Activated CD4-positive, alpha-beta T cell treated with anti-CD3 and anti-CD28 coated beads for 36 hours (primary cell): ENCODE measurements at regions of chr6 and their contacts with region 1.

Region 1: GRCh38 chr6:167079853-167080297 is 43.0 kb upstream of the CCR6 start:
- DNase-seq: peak; percentile 83
- ATAC-seq: peak; percentile 94
- H3K4me3 Mint-ChIP-seq: no peak overlapping the region
- H3K27ac Mint-ChIP-seq: peak overlapping the region; percentile 53
- H3K4me1 Mint-ChIP-seq: peaks cover 22% of the 10 kb centered on the region
- H3K27me3 Mint-ChIP-seq: no peaks in the 10 kb centered on the region

Region 2: GRCh38 chr6:166598441-166599138 is 481.3 kb before region 1 on chr6:
- CTCF ChIA-PET with region 1: no interaction called
- POLR2A ChIA-PET with region 1: no interaction called
- intact Hi-C with region 1: no loop called
- DNase-seq: no peak
- ATAC-seq: no peak
- H3K4me3 Mint-ChIP-seq: no peak overlapping the region
- H3K27ac Mint-ChIP-seq: no peak overlapping the region
- H3K4me1 Mint-ChIP-seq: no peaks in the 10 kb centered on the region
- H3K27me3 Mint-ChIP-seq: no peaks in the 10 kb centered on the region

Region 3: DNA sequence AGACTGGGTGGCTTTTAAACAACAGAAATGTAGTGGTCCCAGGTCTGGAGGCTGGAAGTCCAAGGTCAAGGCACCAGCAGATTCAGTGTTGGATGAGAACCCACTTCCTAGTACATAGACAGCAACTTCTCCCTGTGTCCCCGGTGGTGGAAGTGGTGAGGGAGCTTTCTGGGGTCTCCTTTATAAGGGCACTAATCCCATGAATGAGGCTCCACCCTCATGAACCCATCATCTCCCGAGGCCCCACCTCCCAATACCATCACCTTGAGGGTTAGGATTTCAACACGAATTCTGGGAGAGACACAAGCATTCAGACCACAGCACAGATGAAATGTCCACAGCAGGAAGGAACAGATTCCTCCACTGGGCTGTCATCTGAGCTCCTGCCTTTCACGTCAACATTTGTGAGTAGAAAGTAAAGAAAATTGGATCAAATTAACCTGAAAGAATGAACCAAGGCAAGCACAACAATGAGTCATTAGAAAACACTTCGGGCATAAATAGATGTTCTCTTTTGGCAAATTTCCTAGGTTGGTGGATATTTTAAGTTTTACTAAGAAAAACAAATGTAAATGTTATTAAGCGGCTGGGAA is 254.2 kb before region 1 on chr6:
- CTCF ChIA-PET with region 1: no interaction called
- POLR2A ChIA-PET with region 1: no interaction called
- intact Hi-C with region 1: no loop called
- DNase-seq: no peak
- ATAC-seq: no peak
- H3K4me3 Mint-ChIP-seq: no peak overlapping the region
- H3K27ac Mint-ChIP-seq: no peak overlapping the region
- H3K4me1 Mint-ChIP-seq: peaks cover 6% of the 10 kb centered on the region
- H3K27me3 Mint-ChIP-seq: peaks cover 2% of the 10 kb centered on the region

Region 4: DNA sequence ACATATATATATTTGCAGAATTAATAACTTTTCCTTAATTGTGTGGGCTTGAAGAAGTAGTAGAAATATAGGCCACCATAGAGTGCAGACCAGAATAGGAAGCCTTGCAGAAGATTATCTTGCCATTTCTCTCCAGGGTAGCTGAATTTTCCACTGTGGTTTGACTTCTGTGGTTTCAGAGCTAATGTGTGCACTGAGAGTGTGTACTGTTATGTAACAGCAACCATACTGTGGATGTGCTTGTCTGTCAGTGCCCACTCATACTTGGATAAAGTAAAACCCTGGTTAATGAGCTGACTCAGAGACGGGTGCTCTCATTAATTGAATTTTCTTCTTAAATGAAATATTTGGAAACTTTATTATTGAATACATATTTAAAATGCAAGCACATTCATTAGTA is 23.5 kb before region 1 on chr6:
- CTCF ChIA-PET with region 1: no interaction called
- POLR2A ChIA-PET with region 1: no interaction called
- intact Hi-C with region 1: loop called in 1 of 2 experiments (anchors 2 kb)
- DNase-seq: peak; percentile 47
- ATAC-seq: peak; percentile 92
- H3K4me3 Mint-ChIP-seq: no peak overlapping the region
- H3K27ac Mint-ChIP-seq: no peak overlapping the region
- H3K4me1 Mint-ChIP-seq: peaks cover 33% of the 10 kb centered on the region
- H3K27me3 Mint-ChIP-seq: no peaks in the 10 kb centered on the region

Region 5: GRCh38 chr6:167093922-167094432 is 14.1 kb after region 1 on chr6:
- CTCF ChIA-PET with region 1: interaction called, 3 read pairs
- POLR2A ChIA-PET with region 1: no interaction called
- intact Hi-C with region 1: loop called in 1 of 2 experiments (anchors 2 kb)
- DNase-seq: peak; percentile 75
- ATAC-seq: peak; percentile 73
- H3K4me3 Mint-ChIP-seq: peak overlapping the region; percentile 29
- H3K27ac Mint-ChIP-seq: peak overlapping the region; percentile 49
- H3K4me1 Mint-ChIP-seq: peaks cover 67% of the 10 kb centered on the region
- H3K27me3 Mint-ChIP-seq: no peaks in the 10 kb centered on the region

Region 6: DNA sequence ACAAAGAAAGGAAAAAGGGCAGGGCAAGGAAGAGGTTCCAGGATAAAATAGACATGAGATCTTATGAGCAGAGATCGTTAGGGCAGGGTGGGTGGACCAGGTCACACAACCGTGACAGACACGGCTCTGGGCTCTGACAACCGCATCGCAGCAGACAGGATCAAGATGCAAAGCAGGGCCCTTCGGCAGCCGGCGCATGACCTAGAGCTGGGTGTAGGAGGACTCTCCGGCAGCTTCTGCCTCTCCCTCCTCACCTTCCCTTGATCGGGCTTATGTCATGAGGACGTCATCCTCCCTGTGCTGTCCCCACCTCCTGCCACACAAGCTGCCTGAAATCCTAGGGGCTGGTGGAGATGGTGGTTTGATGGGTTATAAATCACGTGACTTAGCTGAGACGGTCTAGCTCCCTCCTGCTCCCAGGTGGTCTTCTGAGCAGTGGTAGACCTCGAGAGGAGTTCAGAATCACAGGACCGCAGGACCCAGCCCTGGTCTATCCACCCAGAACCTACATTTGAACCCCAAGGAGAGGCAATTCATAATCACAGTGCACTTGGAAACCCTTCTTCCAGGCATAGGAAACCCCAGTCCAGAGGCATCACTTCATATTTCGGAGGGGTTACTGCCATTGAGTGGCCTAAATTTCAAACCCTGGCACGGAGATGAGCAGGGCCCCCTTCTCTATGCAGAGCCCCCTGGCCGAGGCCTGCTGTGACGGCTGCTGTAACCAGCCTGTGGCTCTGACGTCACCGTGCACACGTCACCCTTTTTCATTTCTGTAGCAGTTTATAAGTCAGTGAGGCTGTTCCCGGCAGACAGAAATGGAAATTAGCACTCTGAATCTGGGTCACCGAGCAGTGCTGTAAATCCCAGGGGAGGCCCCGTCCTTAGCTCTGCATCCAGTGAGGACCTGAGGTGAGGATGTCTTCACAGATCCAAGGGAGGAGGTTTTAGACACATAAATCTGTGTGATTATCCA is 34.3 kb after region 1 on chr6:
- CTCF ChIA-PET with region 1: no interaction called
- POLR2A ChIA-PET with region 1: no interaction called
- intact Hi-C with region 1: loop called (anchors 2 kb)
- DNase-seq: peak; percentile 83
- ATAC-seq: peak; percentile 68
- H3K4me3 Mint-ChIP-seq: peak overlapping the region; percentile 73
- H3K27ac Mint-ChIP-seq: peak overlapping the region; percentile 84
- H3K4me1 Mint-ChIP-seq: peaks cover 63% of the 10 kb centered on the region
- H3K27me3 Mint-ChIP-seq: no peaks in the 10 kb centered on the region

Region 7: DNA sequence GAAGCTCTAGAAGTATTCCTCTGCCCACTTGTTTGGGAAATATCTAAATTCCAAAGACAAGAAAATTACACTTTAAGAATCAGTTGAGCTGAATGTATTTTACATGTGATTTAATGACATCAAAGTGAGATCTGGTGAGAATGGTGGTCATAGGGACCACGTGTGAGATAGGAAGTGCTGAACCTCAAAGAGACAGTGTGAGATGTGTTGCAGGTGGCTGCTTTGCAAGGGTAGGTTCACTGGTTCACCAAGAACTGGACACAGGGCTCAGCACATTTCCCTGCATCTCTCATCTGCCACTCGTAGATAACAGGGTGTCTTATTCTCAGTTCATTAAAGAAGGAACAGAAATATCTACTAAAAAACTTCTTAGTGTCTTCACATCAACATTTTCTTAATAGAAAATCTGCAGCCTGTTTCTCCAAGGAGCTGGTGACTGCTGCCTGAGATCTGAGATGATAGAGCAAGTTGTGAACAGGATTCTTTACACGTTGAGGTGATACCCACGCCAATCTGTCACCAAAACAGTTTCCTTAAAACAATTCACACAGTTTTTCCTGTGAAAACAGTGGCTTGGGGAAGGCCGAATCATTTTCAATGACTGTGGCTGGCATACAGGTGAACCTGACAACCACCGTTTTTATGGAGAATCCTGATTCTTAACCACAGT is 50.3 kb after region 1 on chr6:
- CTCF ChIA-PET with region 1: no interaction called
- POLR2A ChIA-PET with region 1: no interaction called
- intact Hi-C with region 1: no loop called
- DNase-seq: no peak
- ATAC-seq: peak; percentile 30
- H3K4me3 Mint-ChIP-seq: no peak overlapping the region
- H3K27ac Mint-ChIP-seq: no peak overlapping the region
- H3K4me1 Mint-ChIP-seq: peaks cover 10% of the 10 kb centered on the region
- H3K27me3 Mint-ChIP-seq: no peaks in the 10 kb centered on the region

Region 8: DNA sequence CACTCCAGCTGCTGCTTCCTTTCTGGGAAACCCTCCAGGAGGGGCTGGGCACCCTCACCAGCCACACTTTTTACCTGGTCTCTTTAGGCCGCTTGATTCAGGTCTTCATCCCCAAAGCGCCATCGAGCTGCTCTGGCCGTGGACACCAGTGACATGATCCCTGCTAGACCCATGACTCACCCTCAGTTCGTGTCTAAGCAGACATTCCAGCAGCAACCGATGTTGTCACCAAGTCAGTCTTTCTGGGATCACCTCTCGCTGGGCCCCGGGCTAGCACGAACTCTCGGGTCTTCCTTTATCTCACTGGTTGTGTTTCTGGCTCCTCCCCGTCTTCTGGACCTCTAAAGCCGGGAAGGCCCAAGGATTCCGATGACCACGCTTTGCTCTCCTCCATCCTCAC is 120.9 kb after region 1 on chr6:
- CTCF ChIA-PET with region 1: no interaction called
- POLR2A ChIA-PET with region 1: no interaction called
- intact Hi-C with region 1: no loop called
- DNase-seq: no peak
- ATAC-seq: no peak
- H3K4me3 Mint-ChIP-seq: no peak overlapping the region
- H3K27ac Mint-ChIP-seq: no peak overlapping the region
- H3K4me1 Mint-ChIP-seq: no peaks in the 10 kb centered on the region
- H3K27me3 Mint-ChIP-seq: peaks cover 26% of the 10 kb centered on the region